Motor neuron (in vitro differentiated cells): ENCODE measurements at regions of chr4 and their contacts with region 1.

Region 1: GRCh38 chr4:18689308-18690115 is 668.0 kb upstream of the LCORL start:
- ATAC-seq: peak in 7 of 8 experiments; percentile 30 to 59 (median 39)
- H3K4me3 ChIP-seq: no peak overlapping the region
- H3K27ac ChIP-seq: no peak overlapping the region
- H3K4me1 ChIP-seq: peaks cover 0 to 3% of the 10 kb centered on the region in 2 donors

Region 2: DNA sequence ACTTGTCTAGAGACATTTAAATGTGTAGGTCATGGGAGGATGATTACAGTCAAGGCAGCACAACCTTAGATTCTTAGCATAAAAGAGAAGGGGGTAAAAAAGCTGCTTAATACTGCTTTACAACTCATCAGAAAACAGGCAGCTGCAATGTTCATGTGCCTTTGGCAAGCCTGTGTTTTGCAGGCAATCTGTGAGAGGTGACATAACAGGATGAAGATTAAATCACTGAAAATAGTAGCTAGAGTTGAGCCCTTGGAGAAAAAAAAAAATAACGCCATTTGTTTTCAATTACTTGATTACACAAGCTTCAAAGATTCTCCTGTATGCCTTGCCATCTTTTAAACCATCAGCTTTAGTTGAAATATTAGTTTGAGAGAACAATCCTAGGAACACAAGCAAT is 179.7 kb after region 1 on chr4:
- in situ Hi-C with region 1: no loop called
- ATAC-seq: peak in 1 of 8 experiments; percentile 29
- H3K4me3 ChIP-seq: no peak overlapping the region
- H3K27ac ChIP-seq: no peak overlapping the region
- H3K4me1 ChIP-seq: no peaks in the 10 kb centered on the region

Region 3: DNA sequence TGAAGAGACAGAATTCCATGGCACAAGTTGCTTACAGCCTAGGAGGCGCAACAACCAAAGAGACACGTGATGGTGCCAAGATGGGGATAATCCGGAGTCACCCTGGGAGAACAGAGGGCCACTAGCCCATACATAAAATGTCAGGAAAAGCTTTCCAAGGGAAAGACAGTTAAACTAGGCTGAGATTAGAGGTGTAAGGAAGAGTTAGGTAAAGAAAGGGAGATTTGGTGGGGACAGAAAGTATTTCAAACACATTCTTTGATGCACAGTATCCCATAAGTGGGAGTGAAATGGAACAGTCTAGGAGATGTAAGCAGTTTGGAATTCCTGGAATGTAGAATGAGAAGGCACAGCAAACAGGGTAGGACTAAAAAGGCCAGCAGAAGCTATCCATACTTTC is 193.0 kb after region 1 on chr4:
- in situ Hi-C with region 1: no loop called
- ATAC-seq: peak in 6 of 8 experiments; percentile 45 to 96 (median 82)
- H3K4me3 ChIP-seq: no peak overlapping the region
- H3K27ac ChIP-seq: no peak overlapping the region
- H3K4me1 ChIP-seq: peaks cover 0 to 2% of the 10 kb centered on the region in 2 donors

Region 4: GRCh38 chr4:18934197-18934596 is 244.7 kb after region 1 on chr4:
- in situ Hi-C with region 1: loop called in 1 of 9 experiments (anchors 10 kb)
- ATAC-seq: peak in 2 of 8 experiments; percentile 56
- H3K4me3 ChIP-seq: no peak overlapping the region
- H3K27ac ChIP-seq: no peak overlapping the region
- H3K4me1 ChIP-seq: peaks cover 0 to 2% of the 10 kb centered on the region in 2 donors

Region 5: DNA sequence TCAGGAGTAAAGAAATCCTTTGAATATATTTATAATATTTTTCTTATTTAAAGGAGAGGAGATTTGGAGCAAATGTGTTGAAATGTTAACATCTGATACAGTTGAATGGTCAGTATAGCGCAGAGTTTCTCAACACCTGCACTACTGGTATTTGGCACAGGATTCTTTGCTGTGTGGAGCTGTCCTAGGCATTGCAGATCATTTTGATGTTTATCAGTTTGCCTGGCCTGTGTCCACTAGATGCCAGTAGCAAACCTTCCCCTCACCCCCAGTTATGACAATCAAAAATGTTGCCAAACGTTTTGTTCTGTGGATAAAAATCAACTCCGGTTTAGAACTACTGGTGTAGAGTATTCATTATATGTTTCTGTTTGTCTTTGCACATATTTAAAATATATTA is 796.9 kb after region 1 on chr4:
- in situ Hi-C with region 1: loop called in 1 of 9 experiments (anchors 25 kb)
- ATAC-seq: peak in 6 of 8 experiments; percentile 43 to 80 (median 54)
- H3K4me3 ChIP-seq: no peak overlapping the region
- H3K27ac ChIP-seq: no peak overlapping the region
- H3K4me1 ChIP-seq: no peaks in the 10 kb centered on the region

Region 6: GRCh38 chr4:20251796-20252655 is 1562.5 kb after region 1 on chr4 and contains the start of gene SLIT2:
- in situ Hi-C with region 1: loop called in 3 of 9 experiments (anchors 25 kb)
- ATAC-seq: peak; percentile 62 to 83 (median 79)
- H3K4me3 ChIP-seq: peak within 1 kb of the TSS; percentile 44 to 82 (median 45)
- H3K27ac ChIP-seq: no peak within 1 kb of the TSS
- H3K4me1 ChIP-seq: peaks cover 0 to 17% of the 10 kb centered on the region in 2 donors
- total RNA-seq, gene SLIT2: 31.0 to 178 (median 107) TPM

Region 7: DNA sequence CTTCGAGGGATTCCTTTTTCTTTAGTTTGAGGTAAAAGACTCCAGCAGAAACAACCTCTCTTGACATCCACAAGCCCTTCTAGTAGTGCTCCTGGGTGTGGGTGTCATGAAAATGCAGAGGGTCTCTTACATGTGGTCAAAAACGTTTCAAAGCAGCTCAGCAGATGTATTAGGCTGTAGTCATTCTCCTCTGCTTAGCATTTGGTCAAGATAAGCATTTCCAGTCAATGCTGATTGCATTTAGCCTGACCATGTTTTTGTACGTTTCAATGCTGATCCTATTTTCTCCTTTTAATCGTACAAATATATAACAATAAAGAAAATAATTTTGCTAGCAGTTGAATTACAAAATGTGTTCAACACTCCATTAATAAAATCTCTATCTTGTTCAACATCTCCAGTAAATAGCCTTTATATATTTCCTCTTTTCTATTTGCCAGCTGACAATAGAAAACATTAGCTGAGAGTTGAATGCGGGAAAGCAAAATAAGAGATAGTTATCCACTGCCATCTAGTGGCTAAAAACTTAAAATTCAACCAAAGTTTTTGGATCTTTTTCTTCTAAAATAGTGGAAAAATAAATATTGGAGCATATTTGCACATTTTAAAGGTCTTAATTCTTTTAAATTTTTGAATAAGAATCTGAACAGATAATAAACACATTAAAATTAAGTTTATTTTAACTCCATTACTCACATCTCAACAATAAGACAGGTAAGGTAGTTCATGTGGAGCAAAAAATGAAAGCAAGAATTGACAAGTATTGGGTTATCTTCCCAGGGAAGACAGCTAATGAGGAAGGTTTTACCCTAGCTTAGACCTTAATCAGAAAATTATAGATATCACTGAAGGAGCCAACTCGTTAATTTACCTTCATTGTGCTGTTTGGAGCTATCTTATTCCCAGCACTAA is 1995.6 kb after region 1 on chr4:
- in situ Hi-C with region 1: loop called in 4 of 9 experiments (anchors 10 to 25 kb)
- ATAC-seq: peak in 5 of 8 experiments; percentile 14 to 54 (median 34)
- H3K4me3 ChIP-seq: no peak overlapping the region
- H3K27ac ChIP-seq: no peak overlapping the region
- H3K4me1 ChIP-seq: peaks cover 3 to 8% of the 10 kb centered on the region in 2 donors